ENCODE measurements at regions of chr17 and their contacts with region 1.

Region 1: DNA sequence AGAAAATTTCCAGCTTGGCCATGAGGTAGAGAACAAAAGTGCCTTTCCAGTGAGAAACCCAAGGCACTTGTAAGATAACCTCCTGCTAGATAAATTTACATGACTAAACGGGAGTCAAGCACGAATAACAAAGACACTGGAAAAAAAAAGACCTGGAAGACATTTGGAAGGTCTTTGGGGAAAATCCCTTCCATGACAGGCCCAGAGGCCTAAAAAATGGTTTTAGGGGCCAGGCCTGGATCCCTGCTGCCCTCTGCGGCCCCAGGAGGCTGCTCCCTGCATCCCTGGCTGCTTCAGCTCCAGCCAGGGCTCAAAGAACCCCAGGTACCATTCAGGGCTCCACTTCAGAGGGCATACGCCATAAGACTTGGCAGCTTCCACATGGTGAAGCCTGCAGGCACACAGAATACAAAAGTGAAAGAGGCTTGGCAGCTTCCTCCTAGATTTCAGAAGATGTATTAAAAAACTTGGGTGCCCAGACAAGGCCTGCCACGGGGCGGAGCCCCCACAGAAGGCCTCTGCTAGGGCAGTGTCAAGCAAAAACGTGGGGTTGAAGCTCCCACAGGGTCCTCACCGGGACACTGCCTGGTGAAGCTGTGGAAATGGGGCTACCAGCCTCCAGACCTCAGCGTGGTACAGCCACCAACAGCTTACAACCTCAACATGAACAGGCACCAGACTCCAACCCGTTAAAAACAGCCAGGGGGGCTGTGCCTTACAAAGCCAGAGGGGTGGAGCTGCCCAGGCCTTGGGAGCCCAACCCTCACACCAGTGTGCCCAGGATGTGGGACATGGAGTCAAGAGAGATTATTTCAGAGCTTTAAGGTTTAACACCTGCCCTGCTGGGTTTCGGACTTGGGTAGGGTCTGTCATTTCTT is 77.1 kb downstream of the SDK2 start:
- DNase-seq: peak; percentile 61
- ATAC-seq: peak; percentile 86
- H3K4me3 Mint-ChIP-seq: peak overlapping the region; percentile 8
- H3K27ac Mint-ChIP-seq: peak overlapping the region; percentile 65
- H3K4me1 Mint-ChIP-seq: peaks cover 20% of the 10 kb centered on the region
- H3K27me3 Mint-ChIP-seq: no peaks in the 10 kb centered on the region

Region 2: DNA sequence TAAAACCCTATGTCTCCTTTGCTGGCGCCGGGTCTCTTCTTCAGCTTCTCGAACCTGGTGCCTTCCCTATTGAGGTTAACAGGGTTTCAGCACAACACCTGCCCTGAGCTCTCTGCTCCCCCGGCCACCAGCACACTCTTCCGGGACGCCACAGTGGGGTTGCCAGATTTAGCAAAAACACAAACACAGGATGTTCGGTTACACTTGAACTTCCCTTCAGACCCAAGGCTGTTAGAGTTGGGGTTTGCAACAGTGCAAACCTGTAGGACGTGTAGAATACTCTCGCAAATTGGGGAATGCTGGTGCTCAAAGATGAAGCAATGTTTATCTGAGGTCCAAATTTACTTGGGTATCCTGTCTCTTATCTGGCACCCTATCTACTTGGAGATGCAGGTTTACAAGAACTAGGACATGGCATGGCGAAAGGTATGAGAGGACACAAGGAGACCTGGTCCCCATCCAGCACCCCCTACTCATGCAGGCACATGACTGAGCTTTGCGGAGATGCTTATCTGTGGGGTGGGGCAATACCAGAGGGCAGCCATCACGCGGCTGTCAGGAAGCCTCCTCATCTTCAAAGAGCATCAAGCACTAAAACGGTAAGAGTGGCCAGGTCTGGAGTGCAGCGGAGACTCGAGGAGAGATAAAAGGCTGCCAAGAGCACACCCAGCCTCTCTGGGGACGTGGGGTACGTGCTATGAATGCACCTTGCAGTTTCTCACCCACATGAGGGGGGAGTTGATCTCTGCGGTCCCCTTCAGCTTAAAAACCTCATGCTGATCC is 24.3 kb after region 1 on chr17:
- CTCF ChIA-PET with region 1: interaction called, 12 read pairs
- POLR2A ChIA-PET with region 1: interaction called, 8 read pairs
- DNase-seq: peak; percentile 83
- ATAC-seq: peak; percentile 76
- H3K4me3 Mint-ChIP-seq: peak overlapping the region; percentile 59
- H3K27ac Mint-ChIP-seq: peak overlapping the region; percentile 89
- H3K4me1 Mint-ChIP-seq: peaks cover 92% of the 10 kb centered on the region
- H3K27me3 Mint-ChIP-seq: no peaks in the 10 kb centered on the region